Esophagus muscularis mucosa (tissue), 4 donors: ENCODE measurements at regions of chr2 and their contacts with region 1.

Region 1: GRCh38 chr2:165499131-165499530 is 29.6 kb downstream of the CSRNP3 start:
- DNase-seq: no peak
- H3K4me3 ChIP-seq: no peak overlapping the region
- H3K27ac ChIP-seq: no peak overlapping the region
- H3K4me1 ChIP-seq: no peaks in the 10 kb centered on the region
- H3K27me3 ChIP-seq: no peaks in the 10 kb centered on the region
- CTCF ChIP-seq: no peak
- EP300 ChIP-seq: no peak
- POLR2A ChIP-seq: no peak

Region 2: DNA sequence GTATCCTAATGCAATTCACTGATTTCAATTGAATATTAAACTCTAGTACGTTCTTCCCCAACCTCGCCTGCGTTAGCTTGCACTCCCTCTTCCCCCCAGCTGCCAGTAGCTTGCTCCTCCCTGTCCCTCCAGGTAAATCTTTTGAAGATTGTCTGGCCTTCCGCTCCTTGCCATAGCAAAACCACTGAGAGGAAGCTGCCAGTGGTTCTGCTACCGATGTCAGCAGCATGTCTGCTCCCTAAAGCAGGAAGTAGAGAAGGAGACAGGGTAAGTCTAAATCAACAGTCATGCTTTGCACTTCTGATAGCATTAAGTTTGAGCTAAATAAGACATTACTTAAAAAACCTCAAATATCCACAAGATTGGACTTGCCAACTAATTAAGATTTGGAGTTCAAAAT is 170.9 kb before region 1 on chr2:
- intact Hi-C with region 1: no loop called
- DNase-seq: no peak
- H3K4me3 ChIP-seq: no peak overlapping the region
- H3K27ac ChIP-seq: no peak overlapping the region
- H3K4me1 ChIP-seq: no peaks in the 10 kb centered on the region
- H3K27me3 ChIP-seq: no peaks in the 10 kb centered on the region
- CTCF ChIP-seq: no peak
- EP300 ChIP-seq: no peak
- POLR2A ChIP-seq: no peak

Region 3: GRCh38 chr2:165479856-165480255 is 19.3 kb before region 1 on chr2:
- intact Hi-C with region 1: loop called (anchors 2 kb)
- DNase-seq: no peak
- H3K4me3 ChIP-seq: no peak overlapping the region
- H3K27ac ChIP-seq: no peak overlapping the region
- H3K4me1 ChIP-seq: no peaks in the 10 kb centered on the region
- H3K27me3 ChIP-seq: no peaks in the 10 kb centered on the region
- CTCF ChIP-seq: no peak
- EP300 ChIP-seq: no peak
- POLR2A ChIP-seq: no peak

Region 4: GRCh38 chr2:165621086-165621560 is 122.0 kb after region 1 on chr2:
- intact Hi-C with region 1: no loop called
- DNase-seq: no peak
- H3K4me3 ChIP-seq: no peak overlapping the region
- H3K27ac ChIP-seq: no peak overlapping the region
- H3K4me1 ChIP-seq: no peaks in the 10 kb centered on the region
- H3K27me3 ChIP-seq: no peaks in the 10 kb centered on the region
- CTCF ChIP-seq: no peak
- EP300 ChIP-seq: no peak
- POLR2A ChIP-seq: no peak